OCI-LY7 (cell line): ENCODE measurements at regions of chr19 and their contacts with region 1.

Region 1: DNA sequence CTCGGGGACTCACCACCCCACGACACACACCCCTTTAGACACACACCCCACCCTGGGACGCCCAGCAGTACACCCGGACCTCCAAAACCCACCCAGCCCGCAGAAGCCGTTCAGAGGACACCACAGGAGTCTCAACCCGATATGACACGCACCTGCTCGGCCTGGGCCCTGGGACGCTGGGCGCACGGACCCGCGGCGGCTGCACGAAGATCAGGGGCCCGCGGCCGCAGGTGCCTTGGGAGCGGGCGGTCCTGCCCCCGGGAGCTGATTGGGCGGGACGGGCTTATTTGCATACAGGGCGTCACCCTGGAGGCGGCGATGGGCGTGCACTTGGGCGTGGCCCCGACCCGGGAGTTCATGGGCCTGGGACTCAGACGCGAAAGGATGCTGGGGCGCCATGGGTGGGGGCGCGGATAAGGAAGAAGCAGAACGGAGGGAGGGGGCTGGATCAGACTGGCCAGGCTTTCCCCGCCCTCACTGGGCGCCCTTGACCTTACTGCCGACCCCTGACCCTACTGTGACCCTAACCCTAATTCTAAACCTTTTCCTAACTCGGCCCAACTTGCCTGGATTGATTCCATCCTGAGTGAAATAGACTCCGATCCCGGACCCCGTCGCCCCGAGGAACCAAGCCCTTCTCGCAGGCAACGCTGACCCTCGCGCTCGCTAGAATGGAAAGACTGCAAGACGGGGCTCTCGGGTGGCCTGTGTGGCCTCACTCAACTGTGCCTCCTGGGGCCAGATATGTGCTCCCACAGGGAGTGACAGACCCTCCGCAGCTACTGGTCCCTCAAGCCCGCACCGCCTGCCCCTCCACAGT is at the start of gene MEF2B:
- DNase-seq: peak; percentile 96
- H3K4me3 ChIP-seq: peak within 1 kb of the TSS; percentile 93
- H3K27ac ChIP-seq: peak within 1 kb of the TSS; percentile 98
- H3K4me1 ChIP-seq: peaks cover 71% of the 10 kb centered on the region
- CTCF ChIP-seq: no peak
- total RNA-seq, gene MEF2B: 175 and 201 TPM in 2 replicates

Region 2: GRCh38 chr19:19053508-19054314 is 116.6 kb before region 1 on chr19:
- CTCF ChIA-PET with region 1: interaction called, 4 read pairs
- POLR2A ChIA-PET with region 1: no interaction called
- intact Hi-C with region 1: loop called (anchors 1 kb)
- DNase-seq: peak; percentile 69
- H3K4me3 ChIP-seq: no peak overlapping the region
- H3K27ac ChIP-seq: no peak overlapping the region
- H3K4me1 ChIP-seq: no peaks in the 10 kb centered on the region
- CTCF ChIP-seq: peak; percentile 87

Region 3: GRCh38 chr19:19138169-19138981 is 31.9 kb before region 1 on chr19 and contains the start of gene TMEM161A:
- CTCF ChIA-PET with region 1: interaction called, 3 read pairs
- POLR2A ChIA-PET with region 1: interaction called, 3 read pairs
- intact Hi-C with region 1: loop called (anchors 1 kb)
- DNase-seq: peak; percentile 98
- H3K4me3 ChIP-seq: peak within 1 kb of the TSS; percentile 85
- H3K27ac ChIP-seq: no peak within 1 kb of the TSS
- H3K4me1 ChIP-seq: peaks cover 19% of the 10 kb centered on the region
- CTCF ChIP-seq: no peak
- total RNA-seq, gene TMEM161A: 28.4 and 31.2 TPM in 2 replicates

Region 4: GRCh38 chr19:19145684-19146608 is 24.3 kb before region 1 on chr19:
- CTCF ChIA-PET with region 1: interaction called, 17 read pairs
- POLR2A ChIA-PET with region 1: interaction called, 5 read pairs
- intact Hi-C with region 1: loop called (anchors 1 kb)
- DNase-seq: peak; percentile 62
- H3K4me3 ChIP-seq: no peak overlapping the region
- H3K27ac ChIP-seq: peak overlapping the region; percentile 46
- H3K4me1 ChIP-seq: peaks cover 55% of the 10 kb centered on the region
- CTCF ChIP-seq: peak; percentile 80

Region 5: GRCh38 chr19:19155495-19156219 is 14.6 kb before region 1 on chr19:
- CTCF ChIA-PET with region 1: interaction called, 8 read pairs
- POLR2A ChIA-PET with region 1: interaction called, 201 read pairs
- intact Hi-C with region 1: loop called (anchors 1 kb)
- DNase-seq: peak; percentile 98
- H3K4me3 ChIP-seq: peak overlapping the region; percentile 59
- H3K27ac ChIP-seq: peak overlapping the region; percentile 98
- H3K4me1 ChIP-seq: peaks cover 96% of the 10 kb centered on the region
- CTCF ChIP-seq: no peak

Region 6: GRCh38 chr19:19214892-19215291 is 44.6 kb after region 1 on chr19:
- CTCF ChIA-PET with region 1: no interaction called
- POLR2A ChIA-PET with region 1: no interaction called
- intact Hi-C with region 1: no loop called
- DNase-seq: peak; percentile 30
- H3K4me3 ChIP-seq: no peak overlapping the region
- H3K27ac ChIP-seq: no peak overlapping the region
- H3K4me1 ChIP-seq: no peaks in the 10 kb centered on the region
- CTCF ChIP-seq: no peak

Region 7: DNA sequence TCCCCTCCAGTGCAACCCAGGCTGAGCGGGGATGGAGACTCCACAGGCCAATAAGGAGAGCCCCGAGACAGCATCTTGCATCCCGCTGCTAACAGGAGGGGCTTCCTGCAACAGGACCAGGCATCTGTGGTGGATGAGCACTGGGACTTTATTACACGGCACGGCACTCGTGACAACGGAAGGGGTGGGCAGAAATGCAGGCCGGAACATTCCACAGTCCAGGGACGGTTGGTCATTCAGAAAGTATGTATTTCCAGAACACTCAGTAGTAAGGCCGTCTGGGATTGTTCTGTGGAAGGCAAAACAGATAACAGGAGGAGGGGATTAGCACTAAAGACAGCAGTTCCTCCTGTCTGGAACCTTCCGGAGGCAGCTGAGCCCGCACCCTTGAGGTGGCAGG is 106.1 kb after region 1 on chr19:
- CTCF ChIA-PET with region 1: no interaction called
- POLR2A ChIA-PET with region 1: no interaction called
- intact Hi-C with region 1: no loop called
- DNase-seq: no peak
- H3K4me3 ChIP-seq: no peak overlapping the region
- H3K27ac ChIP-seq: no peak overlapping the region
- H3K4me1 ChIP-seq: no peaks in the 10 kb centered on the region
- CTCF ChIP-seq: no peak